Right cardiac atrium (tissue), 5 donors: ENCODE measurements at regions of chr1 and their contacts with region 1.

Region 1: GRCh38 chr1:85307987-85308832 is 31.8 kb upstream of the BCL10 start:
- DNase-seq: peak; percentile 88 to 95 (median 95)
- ATAC-seq: peak; percentile 95 to 97
- H3K4me3 ChIP-seq: no peak overlapping the region
- H3K27ac ChIP-seq: no peak overlapping the region
- H3K4me1 ChIP-seq: peaks cover 5% of the 10 kb centered on the region
- H3K27me3 ChIP-seq: no peaks in the 10 kb centered on the region

Region 2: DNA sequence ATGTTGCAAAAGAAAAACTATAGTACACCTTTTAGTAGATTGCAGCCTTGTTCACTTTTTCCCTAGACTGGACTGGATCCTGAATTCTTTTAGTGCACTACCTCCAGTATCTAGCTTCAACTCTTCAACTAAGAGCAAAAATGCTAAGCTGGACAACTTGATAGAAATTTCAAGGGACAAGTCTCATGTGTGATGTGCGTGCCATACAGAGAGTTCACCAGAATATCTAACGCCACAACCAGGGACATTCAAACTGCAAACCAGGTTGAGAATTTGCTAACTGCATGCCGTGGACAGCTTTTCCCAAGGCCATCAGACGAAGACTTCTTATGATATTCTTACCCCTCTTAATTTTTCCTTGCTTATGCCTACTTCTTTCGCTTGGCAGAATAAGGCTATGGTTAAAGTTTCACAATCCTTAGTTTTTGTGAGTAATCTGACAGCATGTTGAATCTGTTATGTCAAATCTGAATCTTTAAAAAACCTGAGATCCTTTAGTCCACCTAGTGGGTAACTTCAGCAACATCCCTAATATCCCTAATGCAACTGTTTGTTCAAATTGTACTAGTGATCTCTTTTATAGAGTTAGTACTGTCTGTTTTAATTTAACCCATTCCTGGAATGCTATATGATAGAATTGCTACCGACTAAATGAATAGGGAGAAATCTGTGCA is 90.3 kb after region 1 on chr1:
- intact Hi-C with region 1: loop called in 3 of 4 experiments (anchors 2 to 10 kb)
- DNase-seq: no peak
- ATAC-seq: no peak
- H3K4me3 ChIP-seq: no peak overlapping the region
- H3K27ac ChIP-seq: no peak overlapping the region
- H3K4me1 ChIP-seq: no peaks in the 10 kb centered on the region
- H3K27me3 ChIP-seq: no peaks in the 10 kb centered on the region

Region 3: GRCh38 chr1:85406887-85407533 is 98.8 kb after region 1 on chr1:
- intact Hi-C with region 1: loop called in 2 of 4 experiments (anchors 5 to 10 kb)
- DNase-seq: peak in 2 of 3 donors; percentile 35 to 37
- ATAC-seq: peak; percentile 91 to 94
- H3K4me3 ChIP-seq: no peak overlapping the region
- H3K27ac ChIP-seq: no peak overlapping the region
- H3K4me1 ChIP-seq: no peaks in the 10 kb centered on the region
- H3K27me3 ChIP-seq: no peaks in the 10 kb centered on the region

Region 4: GRCh38 chr1:85502625-85503083 is 194.4 kb after region 1 on chr1:
- intact Hi-C with region 1: loop called (anchors 2 to 5 kb)
- DNase-seq: peak in 2 of 3 donors; percentile 25 to 60
- ATAC-seq: peak; percentile 81 to 90
- H3K4me3 ChIP-seq: no peak overlapping the region
- H3K27ac ChIP-seq: no peak overlapping the region
- H3K4me1 ChIP-seq: no peaks in the 10 kb centered on the region
- H3K27me3 ChIP-seq: no peaks in the 10 kb centered on the region

Region 5: GRCh38 chr1:85580872-85581801 is 272.9 kb after region 1 on chr1:
- intact Hi-C with region 1: loop called in 2 of 4 experiments (anchors 10 kb)
- DNase-seq: peak; percentile 72 to 91 (median 88)
- ATAC-seq: peak; percentile 60 to 61
- H3K4me3 ChIP-seq: peak overlapping the region; percentile 60
- H3K27ac ChIP-seq: peak overlapping the region; percentile 96
- H3K4me1 ChIP-seq: peaks cover 6% of the 10 kb centered on the region
- H3K27me3 ChIP-seq: no peaks in the 10 kb centered on the region

Region 6: GRCh38 chr1:85692730-85693314 is 384.6 kb after region 1 on chr1:
- intact Hi-C with region 1: loop called in 3 of 4 experiments (anchors 5 kb)
- DNase-seq: no peak
- ATAC-seq: no peak
- H3K4me3 ChIP-seq: no peak overlapping the region
- H3K27ac ChIP-seq: no peak overlapping the region
- H3K4me1 ChIP-seq: no peaks in the 10 kb centered on the region
- H3K27me3 ChIP-seq: no peaks in the 10 kb centered on the region